Posterior vena cava (tissue), 2 donors: ENCODE measurements at regions of chr16 and their contacts with region 1.

Region 1: GRCh38 chr16:21708533-21709115 is 44.9 kb downstream of the OTOA start:
- DNase-seq: no peak

Region 2: DNA sequence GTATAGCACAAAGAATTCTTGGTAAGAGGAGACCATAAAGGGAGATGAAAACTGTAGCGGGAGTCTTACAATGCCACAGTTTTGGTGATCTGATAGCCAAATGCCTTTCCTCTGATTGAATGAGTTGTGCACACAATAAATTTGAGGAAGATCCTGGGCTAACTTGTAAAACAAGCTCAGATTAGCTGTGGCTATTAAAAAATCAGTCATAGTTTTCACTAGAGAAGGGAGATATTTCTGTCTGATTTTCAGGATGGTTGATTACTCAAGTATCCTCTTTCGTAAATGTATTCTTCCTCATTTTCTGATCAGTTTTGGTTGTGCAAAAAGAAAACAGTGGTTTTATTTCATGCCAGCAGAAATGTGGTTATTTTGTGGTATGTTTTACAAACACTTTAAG is 118.3 kb before region 1 on chr16:
- intact Hi-C with region 1: loop called in 1 of 2 experiments (anchors 5 kb)
- DNase-seq: no peak

Region 3: DNA sequence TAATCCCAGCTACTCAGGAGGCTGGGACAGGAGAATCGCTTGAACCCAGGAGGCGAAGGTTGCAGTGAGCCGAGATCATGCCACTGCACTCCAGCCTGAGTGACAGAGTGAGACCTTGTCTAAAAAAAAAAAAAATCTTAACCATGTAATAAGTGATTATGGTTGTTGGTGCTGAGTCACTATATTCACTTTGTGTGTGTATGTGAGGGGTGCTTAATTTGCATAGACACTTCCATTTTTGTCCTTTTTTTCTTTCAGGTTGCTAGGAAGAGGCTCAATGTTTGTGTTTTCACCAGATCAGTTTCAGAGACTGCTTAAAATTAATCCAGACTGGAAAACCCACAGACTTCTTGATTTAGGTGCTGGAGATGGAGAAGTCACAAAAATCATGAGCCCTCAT is 91.0 kb before region 1 on chr16:
- intact Hi-C with region 1: no loop called
- DNase-seq: no peak

Region 4: DNA sequence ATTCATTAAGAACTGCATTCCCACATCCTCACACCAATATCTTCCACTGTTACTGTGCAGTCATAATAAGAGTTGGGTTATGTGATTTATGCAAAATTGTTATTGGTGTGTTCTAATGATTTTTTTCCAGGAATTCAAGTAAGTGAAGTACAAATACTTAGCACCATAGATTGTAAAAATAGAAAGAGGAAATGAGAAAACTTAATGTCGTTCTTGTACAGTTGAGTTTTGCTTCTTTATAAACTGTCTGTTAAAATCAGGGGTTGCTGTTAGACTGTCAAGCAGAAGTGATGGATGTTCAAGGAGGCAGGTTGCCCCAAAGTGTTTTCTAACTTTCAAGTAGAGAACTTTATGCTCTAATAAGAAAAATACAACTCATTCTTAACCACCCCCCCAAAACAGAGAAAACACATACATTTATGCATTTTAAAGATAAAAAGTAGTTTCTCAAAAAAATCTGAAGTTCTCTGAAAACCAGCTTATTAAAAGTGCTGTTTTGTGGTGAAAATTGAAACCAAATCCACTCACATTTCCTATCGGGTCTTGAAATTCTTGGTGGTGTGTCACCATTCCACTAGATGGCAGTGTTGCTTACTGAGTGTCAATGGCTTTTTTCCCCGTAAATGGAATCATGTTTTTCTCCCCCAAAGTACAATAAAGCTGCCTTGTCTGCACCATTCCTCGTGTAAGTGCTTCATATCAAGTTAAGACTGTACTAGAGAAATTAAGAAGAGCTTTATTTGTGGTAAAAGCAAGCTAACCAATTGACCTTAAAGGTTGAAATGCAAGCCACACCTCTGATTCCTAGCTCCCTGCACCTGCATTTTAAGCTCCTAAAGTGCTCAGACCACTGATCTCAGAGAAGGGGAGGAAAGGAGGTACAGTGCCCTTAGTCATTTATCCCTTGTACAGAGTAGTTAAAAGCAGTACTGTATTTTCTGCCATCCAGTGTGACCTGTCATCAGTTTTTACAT is 51.5 kb before region 1 on chr16:
- intact Hi-C with region 1: loop called (anchors 2 to 5 kb)
- DNase-seq: no peak